ENCODE measurements at regions of chr20 and their contacts with region 1.

Region 1: DNA sequence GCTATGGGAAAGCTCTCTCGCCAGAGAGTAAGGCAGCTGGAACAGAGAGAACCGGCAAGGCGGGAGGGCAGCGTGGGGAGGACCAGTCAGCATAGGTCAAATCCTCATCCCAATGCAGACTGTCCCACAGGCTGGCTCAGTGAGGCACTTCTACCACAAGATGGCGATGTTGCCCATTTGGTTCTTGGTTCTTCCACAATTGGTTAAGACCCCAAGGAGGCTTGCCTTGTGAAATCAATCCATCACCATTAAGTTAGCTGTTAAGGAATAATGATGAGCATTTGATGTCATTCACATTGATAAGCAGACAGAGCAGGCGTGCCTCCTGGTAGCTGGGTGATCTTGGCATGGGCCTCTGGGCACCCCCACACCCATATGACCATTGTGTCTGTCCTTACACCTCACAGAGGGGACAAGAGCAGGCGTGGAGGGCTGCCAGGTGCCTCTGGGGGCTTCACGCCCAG is 2.4 kb downstream of the CSTL1 start:
- DNase-seq: peak; percentile 89
- ATAC-seq: peak; percentile 97
- H3K4me3 Mint-ChIP-seq: no peak overlapping the region
- H3K27ac Mint-ChIP-seq: no peak overlapping the region
- H3K4me1 Mint-ChIP-seq: 0 out of 2 replicates have a peak, but pooled peaks cover 7% of the 10 kb centered on the region
- H3K27me3 Mint-ChIP-seq: peaks cover 4% of the 10 kb centered on the region; the same call in 1 of the 2 replicates
- CTCF ChIP-seq: peak; percentile 80

Region 2: GRCh38 chr20:23414526-23415188 is 27.2 kb before region 1 on chr20:
- CTCF ChIA-PET with region 1: no interaction called
- POLR2A ChIA-PET with region 1: no interaction called
- DNase-seq: no peak
- ATAC-seq: no peak
- H3K4me3 Mint-ChIP-seq: no peak overlapping the region
- H3K27ac Mint-ChIP-seq: no peak overlapping the region
- H3K4me1 Mint-ChIP-seq: peaks cover 23% of the 10 kb centered on the region
- H3K27me3 Mint-ChIP-seq: no peaks in the 10 kb centered on the region
- CTCF ChIP-seq: no peak

Region 3: DNA sequence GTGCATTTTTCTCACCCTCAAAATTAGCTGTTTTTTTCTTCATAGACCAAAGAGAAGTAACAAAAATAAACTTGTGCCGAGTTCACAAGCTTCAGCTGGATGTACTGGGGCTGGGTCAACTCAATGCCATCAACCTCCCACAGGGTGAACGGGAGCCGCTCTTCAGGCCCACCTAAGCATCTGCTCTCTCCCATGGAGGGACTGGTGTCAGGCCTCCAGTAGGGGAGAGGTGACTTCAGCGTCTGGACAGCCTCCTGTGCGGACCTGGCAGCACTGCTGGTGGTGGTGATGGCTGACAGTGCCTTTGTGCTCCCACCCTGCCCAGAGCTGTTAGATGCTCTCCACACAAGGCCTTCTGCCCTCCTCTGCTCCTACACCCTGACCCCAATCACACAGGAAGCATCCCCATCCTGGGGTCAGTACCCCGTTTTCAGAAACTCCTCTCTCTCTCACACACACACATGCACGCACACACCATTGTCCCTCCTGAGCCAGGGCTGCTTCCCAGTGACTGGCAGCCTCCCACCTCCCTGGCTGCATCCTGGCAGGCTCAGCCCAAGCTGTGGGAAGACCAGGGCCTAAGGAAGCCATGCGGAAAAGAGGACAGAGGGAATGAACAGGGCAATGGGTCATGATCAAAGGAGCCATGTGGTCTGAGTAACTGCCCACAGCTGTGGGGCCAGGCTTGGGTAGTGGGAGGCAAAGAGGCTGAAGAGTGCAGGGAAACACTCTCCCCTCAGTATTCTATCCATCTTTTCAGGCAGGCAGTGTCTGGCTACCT is 66.8 kb after region 1 on chr20:
- CTCF ChIA-PET with region 1: interaction called, 12 read pairs
- POLR2A ChIA-PET with region 1: no interaction called
- DNase-seq: no peak
- ATAC-seq: peak; percentile 34
- H3K4me3 Mint-ChIP-seq: no peak overlapping the region
- H3K27ac Mint-ChIP-seq: no peak overlapping the region
- H3K4me1 Mint-ChIP-seq: peaks cover 45% of the 10 kb centered on the region
- H3K27me3 Mint-ChIP-seq: peaks cover 8% of the 10 kb centered on the region; the same call in 1 of the 2 replicates
- CTCF ChIP-seq: no peak

Region 4: DNA sequence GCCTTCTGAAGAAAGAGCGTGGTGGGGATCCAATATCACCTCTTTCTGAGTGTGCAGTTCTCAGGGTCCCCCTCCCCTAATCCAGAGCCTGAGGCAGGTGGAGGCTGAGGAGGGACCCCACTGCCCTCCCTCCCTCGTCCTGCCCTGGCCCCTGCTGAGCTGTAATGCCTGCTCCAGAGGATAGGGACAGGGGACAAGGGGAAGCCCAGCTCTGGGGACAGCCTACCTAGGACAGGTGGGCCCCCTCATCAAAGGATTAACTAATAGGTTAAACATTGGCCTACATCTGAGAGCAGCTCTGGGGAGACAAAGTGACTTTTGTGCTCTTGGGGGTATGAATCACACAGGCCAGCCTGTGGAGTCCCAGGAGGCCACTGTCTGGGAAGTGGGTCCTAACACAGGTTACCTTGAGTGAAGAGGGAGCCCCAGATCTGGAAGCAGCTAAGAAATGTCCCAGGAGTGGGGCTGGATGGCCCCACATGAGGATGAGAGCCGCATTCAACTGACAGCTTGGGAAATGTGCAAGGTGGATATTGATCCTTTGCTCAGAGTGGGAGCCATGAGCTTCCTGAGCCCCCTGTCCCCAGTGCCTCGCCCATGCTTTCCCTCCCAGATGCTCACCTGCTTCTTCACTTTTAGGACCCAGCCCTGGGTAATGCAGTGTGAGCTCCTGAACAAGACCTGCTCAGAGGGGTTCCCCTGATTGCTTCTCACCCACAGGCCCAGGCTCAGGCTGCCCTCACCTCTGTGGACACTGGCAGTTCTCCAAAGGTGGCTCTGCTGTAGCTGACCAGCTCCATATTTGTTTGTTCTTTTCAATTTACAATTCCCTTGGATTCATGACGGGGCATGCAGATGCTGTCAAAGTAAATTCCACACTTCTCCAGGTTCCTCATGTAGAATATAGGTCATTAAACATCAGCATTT is 144.2 kb after region 1 on chr20:
- CTCF ChIA-PET with region 1: interaction called, 38 read pairs
- POLR2A ChIA-PET with region 1: no interaction called
- DNase-seq: no peak
- ATAC-seq: no peak
- H3K4me3 Mint-ChIP-seq: no peak overlapping the region
- H3K27ac Mint-ChIP-seq: no peak overlapping the region
- H3K4me1 Mint-ChIP-seq: peaks cover 28% of the 10 kb centered on the region
- H3K27me3 Mint-ChIP-seq: peaks cover 35% of the 10 kb centered on the region
- CTCF ChIP-seq: no peak

Region 5: DNA sequence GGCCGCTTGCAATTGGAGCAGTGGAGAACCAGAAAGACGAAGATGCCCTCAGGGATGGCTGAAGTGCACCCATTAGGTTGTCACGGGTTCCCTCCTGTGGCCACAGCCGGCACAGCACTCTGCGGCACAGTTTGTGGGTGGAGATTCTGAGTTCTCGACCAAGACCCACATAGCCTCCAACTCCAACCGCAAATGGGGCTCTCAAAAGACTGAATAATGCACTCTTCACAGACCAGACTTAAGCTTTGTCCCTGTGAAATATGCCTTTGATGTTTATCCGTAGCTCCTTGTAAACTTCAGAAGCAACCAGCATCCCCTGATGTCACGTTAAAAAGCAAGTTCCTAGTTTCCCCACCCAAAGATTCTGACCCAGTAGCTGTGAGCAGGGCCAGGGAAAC is 164.8 kb after region 1 on chr20:
- CTCF ChIA-PET with region 1: interaction called, 56 read pairs
- POLR2A ChIA-PET with region 1: no interaction called
- DNase-seq: peak; percentile 91
- ATAC-seq: peak; percentile 89
- H3K4me3 Mint-ChIP-seq: no peak overlapping the region
- H3K27ac Mint-ChIP-seq: no peak overlapping the region
- H3K4me1 Mint-ChIP-seq: peaks cover 29% of the 10 kb centered on the region
- H3K27me3 Mint-ChIP-seq: peaks cover 26% of the 10 kb centered on the region; the same call in 1 of the 2 replicates
- CTCF ChIP-seq: peak; percentile 83